Heart left ventricle (tissue), 16 donors: ENCODE measurements at regions of chr1 and their contacts with region 1.

Region 1: DNA sequence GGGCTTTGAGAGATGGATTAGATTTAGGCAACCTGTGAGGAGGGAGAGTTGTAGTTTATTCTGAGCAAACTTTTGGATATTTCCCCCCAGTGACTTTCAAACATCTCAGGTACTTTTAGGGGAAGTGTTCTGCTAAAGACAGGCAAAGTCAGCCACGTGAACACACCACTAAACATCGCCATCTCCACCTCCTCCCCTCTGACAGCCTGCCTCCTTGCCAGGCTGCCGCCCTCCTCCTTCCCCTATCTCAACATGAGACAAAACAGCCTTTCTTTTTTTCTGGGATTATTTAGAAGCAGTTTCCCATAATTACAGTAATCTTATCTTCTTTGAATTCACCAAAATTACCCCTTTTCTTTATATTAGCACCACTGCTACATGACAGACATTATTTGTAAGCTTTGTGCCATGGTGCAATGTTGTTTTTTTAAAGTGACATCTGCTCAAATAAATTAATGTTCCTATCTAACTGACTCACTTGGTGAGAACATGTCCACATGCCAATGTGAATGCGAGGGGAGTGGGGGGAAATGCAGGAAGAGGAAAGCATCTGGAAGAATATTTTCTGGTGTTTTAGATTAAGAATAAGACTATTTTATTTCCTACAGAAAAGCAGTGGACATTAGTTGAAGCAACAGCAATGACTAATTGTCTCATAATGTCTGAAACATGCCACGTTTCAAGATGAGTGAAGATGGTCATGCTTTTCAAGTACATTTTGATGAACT is 147.8 kb upstream of the ATP1B1 start:
- DNase-seq: no peak
- ATAC-seq: peak in 1 of 4 donors; percentile 65
- H3K4me3 ChIP-seq: no peak overlapping the region
- H3K27ac ChIP-seq: peak overlapping the region in 1 of 12 donors; percentile 29
- H3K4me1 ChIP-seq: peaks cover 0 to 13% (median 0%) of the 10 kb centered on the region in 12 donors
- H3K27me3 ChIP-seq: no peaks in the 10 kb centered on the region
- CTCF ChIP-seq: no peak
- POLR2A ChIP-seq: no peak

Region 2: DNA sequence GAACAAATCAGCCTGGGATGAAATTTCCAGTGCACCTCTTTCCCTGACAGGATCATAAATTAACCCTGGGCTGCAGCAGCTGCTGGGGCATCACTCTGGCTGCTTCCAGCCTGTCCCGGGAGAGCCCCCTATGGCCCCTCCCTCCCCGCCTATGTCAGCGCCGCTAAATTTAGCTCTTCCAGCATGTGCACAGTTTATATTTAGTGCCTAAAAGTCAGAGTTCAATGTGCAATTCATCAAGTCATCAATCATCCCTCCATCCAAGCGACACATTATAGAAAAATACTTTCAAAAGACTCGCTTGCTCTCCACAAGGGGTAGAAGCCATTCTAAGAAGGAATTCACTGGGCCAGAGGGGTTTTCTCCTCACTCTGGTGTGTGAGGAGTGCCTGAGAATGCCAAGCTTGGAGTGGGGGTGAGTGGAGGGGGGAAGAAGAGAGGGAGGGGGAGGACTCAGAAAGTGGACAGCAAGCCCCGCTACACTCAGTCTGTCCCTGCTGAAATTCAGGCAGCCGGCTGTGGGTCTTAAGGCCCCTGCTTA is 345.0 kb before region 1 on chr1:
- intact Hi-C with region 1: no loop called
- DNase-seq: peak; percentile 66 to 78 (median 67)
- ATAC-seq: peak; percentile 86 to 92 (median 91)
- H3K4me3 ChIP-seq: peak overlapping the region in 1 of 12 donors; percentile 11
- H3K27ac ChIP-seq: peak overlapping the region in 9 of 12 donors; percentile 29 to 73 (median 48)
- H3K4me1 ChIP-seq: peaks cover 0 to 34% (median 18%) of the 10 kb centered on the region in 12 donors
- H3K27me3 ChIP-seq: no peaks in the 10 kb centered on the region
- CTCF ChIP-seq: no peak
- POLR2A ChIP-seq: peak in 1 of 2 donors; percentile 41

Region 3: DNA sequence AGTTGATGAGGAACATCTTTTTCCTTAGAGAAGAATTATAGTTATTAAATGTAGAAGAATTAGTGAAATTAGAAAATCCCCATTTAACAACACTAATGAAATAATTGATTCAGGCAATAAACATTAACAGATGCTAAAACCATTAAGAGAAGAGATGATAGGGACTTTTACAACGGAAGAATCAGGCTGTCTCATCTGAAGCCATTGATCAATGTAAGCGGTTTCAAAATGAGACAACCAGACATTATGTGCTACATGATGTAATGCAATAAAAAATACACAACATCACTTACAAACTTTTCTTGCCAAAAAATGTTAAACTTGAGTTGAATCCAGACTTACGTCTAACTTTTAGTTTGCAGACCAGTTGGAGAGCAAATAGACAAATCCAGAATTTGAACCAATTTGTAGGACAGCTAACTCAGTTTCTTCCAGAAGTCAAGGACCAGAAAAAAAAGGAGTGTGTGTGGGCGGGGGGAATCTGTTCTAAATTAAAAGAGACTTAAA is 64.3 kb before region 1 on chr1:
- intact Hi-C with region 1: loop called in 1 of 10 experiments (anchors 2 kb)
- DNase-seq: no peak
- ATAC-seq: peak in 1 of 4 donors; percentile 30
- H3K4me3 ChIP-seq: no peak overlapping the region
- H3K27ac ChIP-seq: peak overlapping the region in 3 of 12 donors; percentile 53 to 74 (median 58)
- H3K4me1 ChIP-seq: peaks cover 0 to 14% (median 0%) of the 10 kb centered on the region in 12 donors
- H3K27me3 ChIP-seq: no peaks in the 10 kb centered on the region
- CTCF ChIP-seq: no peak
- POLR2A ChIP-seq: no peak